Calu3 (cell line): ENCODE measurements at regions of chr11 and their contacts with region 1.

Region 1: DNA sequence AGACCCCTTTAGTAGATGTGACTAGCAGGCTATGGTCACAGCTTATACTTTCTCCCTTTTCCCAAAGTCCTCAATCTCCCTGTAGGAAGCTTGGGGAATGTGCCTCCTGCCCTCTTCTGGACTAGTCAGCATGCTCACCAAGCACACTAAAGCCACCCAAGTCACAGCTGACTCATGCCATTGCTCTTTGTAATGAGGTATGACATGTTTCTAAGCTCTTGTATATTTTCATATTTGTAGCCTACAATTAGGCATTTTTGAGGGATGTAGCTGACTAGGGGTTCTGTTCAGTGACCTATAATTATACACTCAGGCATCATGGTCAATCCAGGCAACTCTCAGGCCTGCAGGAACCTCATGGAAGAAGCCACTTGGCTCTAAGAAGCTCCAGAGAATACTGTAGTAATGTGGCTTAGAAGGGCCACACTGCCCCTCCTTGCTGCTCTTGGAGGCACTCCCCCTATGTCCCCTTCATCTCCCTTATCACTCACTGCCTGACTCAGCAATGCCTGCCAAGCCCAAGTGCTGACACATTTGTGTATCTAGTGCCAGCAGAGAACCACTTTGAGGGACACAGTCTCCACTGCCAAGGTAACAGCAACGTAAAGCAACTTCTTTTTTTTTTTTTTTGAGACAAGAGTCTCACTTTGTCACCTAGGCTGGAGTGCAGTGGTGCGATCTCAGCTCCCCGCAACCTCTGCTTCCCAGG is 86.2 kb downstream of the RPL27A start:
- DNase-seq: peak; percentile 12
- H3K4me3 Mint-ChIP-seq: no peak overlapping the region
- H3K27ac Mint-ChIP-seq: no peak overlapping the region
- H3K4me1 Mint-ChIP-seq: peaks cover 21% of the 10 kb centered on the region
- H3K27me3 Mint-ChIP-seq: no peaks in the 10 kb centered on the region
- CTCF ChIP-seq: no peak

Region 2: GRCh38 chr11:8415195-8415594 is 353.6 kb before region 1 on chr11:
- CTCF ChIA-PET with region 1: no interaction called
- intact Hi-C with region 1: no loop called
- DNase-seq: no peak
- H3K4me3 Mint-ChIP-seq: no peak overlapping the region
- H3K27ac Mint-ChIP-seq: no peak overlapping the region
- H3K4me1 Mint-ChIP-seq: no peaks in the 10 kb centered on the region
- H3K27me3 Mint-ChIP-seq: no peaks in the 10 kb centered on the region
- CTCF ChIP-seq: no peak

Region 3: GRCh38 chr11:8717876-8718753 is 50.7 kb before region 1 on chr11:
- CTCF ChIA-PET with region 1: no interaction called
- intact Hi-C with region 1: loop called (anchors 5 kb)
- DNase-seq: peak; percentile 43
- H3K4me3 Mint-ChIP-seq: peak overlapping the region; percentile 36
- H3K27ac Mint-ChIP-seq: peak overlapping the region; percentile 88
- H3K4me1 Mint-ChIP-seq: peaks cover 59% of the 10 kb centered on the region
- H3K27me3 Mint-ChIP-seq: no peaks in the 10 kb centered on the region
- CTCF ChIP-seq: no peak

Region 4: GRCh38 chr11:8728563-8728962 is 40.2 kb before region 1 on chr11:
- CTCF ChIA-PET with region 1: no interaction called
- intact Hi-C with region 1: no loop called
- DNase-seq: no peak
- H3K4me3 Mint-ChIP-seq: no peak overlapping the region
- H3K27ac Mint-ChIP-seq: no peak overlapping the region
- H3K4me1 Mint-ChIP-seq: no peaks in the 10 kb centered on the region
- H3K27me3 Mint-ChIP-seq: no peaks in the 10 kb centered on the region
- CTCF ChIP-seq: no peak